ENCODE measurements at regions of chr11 and their contacts with region 1.

Region 1: GRCh38 chr11:124837491-124837856 is 27.8 kb upstream of the ROBO3 start:
- H3K4me3 Mint-ChIP-seq: no peak overlapping the region
- H3K27ac Mint-ChIP-seq: no peak overlapping the region
- H3K4me1 Mint-ChIP-seq: peaks cover 10% of the 10 kb centered on the region
- H3K27me3 Mint-ChIP-seq: peaks cover 78% of the 10 kb centered on the region

Region 2: GRCh38 chr11:124402326-124402922 is 435.1 kb before region 1 on chr11:
- intact Hi-C with region 1: loop called (anchors 5 kb)
- H3K4me3 Mint-ChIP-seq: no peak overlapping the region
- H3K27ac Mint-ChIP-seq: no peak overlapping the region
- H3K4me1 Mint-ChIP-seq: no peaks in the 10 kb centered on the region
- H3K27me3 Mint-ChIP-seq: peaks cover 7% of the 10 kb centered on the region

Region 3: GRCh38 chr11:124415356-124415923 is 422.0 kb before region 1 on chr11:
- intact Hi-C with region 1: loop called (anchors 5 kb)
- H3K4me3 Mint-ChIP-seq: no peak overlapping the region
- H3K27ac Mint-ChIP-seq: no peak overlapping the region
- H3K4me1 Mint-ChIP-seq: no peaks in the 10 kb centered on the region
- H3K27me3 Mint-ChIP-seq: peaks cover 15% of the 10 kb centered on the region

Region 4: GRCh38 chr11:124644426-124645280 is 192.8 kb before region 1 on chr11:
- intact Hi-C with region 1: loop called (anchors 1 kb)
- H3K4me3 Mint-ChIP-seq: peak overlapping the region; percentile 27
- H3K27ac Mint-ChIP-seq: no peak overlapping the region
- H3K4me1 Mint-ChIP-seq: peaks cover 7% of the 10 kb centered on the region
- H3K27me3 Mint-ChIP-seq: no peaks in the 10 kb centered on the region

Region 5: GRCh38 chr11:124800226-124800929 is 37.1 kb before region 1 on chr11 and contains the start of gene MSANTD2:
- intact Hi-C with region 1: loop called (anchors 2 kb)
- H3K4me3 Mint-ChIP-seq: peak within 1 kb of the TSS; percentile 93
- H3K27ac Mint-ChIP-seq: peak within 1 kb of the TSS; percentile 94
- H3K4me1 Mint-ChIP-seq: peaks cover 16% of the 10 kb centered on the region
- H3K27me3 Mint-ChIP-seq: peaks cover 28% of the 10 kb centered on the region

Region 6: DNA sequence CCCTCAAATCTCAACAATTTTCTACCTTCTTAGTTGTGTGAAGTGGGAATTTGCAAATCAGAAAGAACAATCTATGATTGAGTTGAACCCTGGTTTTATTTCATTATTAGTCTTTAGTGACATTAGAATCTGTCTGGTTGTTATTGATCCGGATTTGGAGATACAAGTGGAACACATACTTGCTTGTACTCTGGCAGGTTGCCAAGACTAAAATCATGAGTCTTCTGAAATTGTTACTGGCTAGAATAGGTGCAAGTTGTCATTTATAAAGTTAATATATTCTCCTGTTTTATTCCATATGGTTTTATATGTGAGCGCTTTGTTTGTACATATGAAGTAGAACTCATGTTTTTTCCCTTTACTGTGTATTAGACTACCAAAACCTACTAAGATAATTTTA is 139.5 kb after region 1 on chr11:
- intact Hi-C with region 1: no loop called
- H3K4me3 Mint-ChIP-seq: no peak overlapping the region
- H3K27ac Mint-ChIP-seq: no peak overlapping the region
- H3K4me1 Mint-ChIP-seq: no peaks in the 10 kb centered on the region
- H3K27me3 Mint-ChIP-seq: no peaks in the 10 kb centered on the region